ENCODE measurements at regions of chr17 and their contacts with region 1.

Region 1: GRCh38 chr17:21126645-21127510 is at the start of gene DHRS7B:
- DNase-seq: peak; percentile 95
- H3K4me3 Mint-ChIP-seq: peak within 1 kb of the TSS; percentile 93
- H3K27ac Mint-ChIP-seq: peak within 1 kb of the TSS; percentile 95
- H3K4me1 Mint-ChIP-seq: peaks cover 24% of the 10 kb centered on the region
- H3K27me3 Mint-ChIP-seq: no peaks in the 10 kb centered on the region
- total RNA-seq, gene DHRS7B: 17.7 and 19.4 TPM in 2 replicates

Region 2: DNA sequence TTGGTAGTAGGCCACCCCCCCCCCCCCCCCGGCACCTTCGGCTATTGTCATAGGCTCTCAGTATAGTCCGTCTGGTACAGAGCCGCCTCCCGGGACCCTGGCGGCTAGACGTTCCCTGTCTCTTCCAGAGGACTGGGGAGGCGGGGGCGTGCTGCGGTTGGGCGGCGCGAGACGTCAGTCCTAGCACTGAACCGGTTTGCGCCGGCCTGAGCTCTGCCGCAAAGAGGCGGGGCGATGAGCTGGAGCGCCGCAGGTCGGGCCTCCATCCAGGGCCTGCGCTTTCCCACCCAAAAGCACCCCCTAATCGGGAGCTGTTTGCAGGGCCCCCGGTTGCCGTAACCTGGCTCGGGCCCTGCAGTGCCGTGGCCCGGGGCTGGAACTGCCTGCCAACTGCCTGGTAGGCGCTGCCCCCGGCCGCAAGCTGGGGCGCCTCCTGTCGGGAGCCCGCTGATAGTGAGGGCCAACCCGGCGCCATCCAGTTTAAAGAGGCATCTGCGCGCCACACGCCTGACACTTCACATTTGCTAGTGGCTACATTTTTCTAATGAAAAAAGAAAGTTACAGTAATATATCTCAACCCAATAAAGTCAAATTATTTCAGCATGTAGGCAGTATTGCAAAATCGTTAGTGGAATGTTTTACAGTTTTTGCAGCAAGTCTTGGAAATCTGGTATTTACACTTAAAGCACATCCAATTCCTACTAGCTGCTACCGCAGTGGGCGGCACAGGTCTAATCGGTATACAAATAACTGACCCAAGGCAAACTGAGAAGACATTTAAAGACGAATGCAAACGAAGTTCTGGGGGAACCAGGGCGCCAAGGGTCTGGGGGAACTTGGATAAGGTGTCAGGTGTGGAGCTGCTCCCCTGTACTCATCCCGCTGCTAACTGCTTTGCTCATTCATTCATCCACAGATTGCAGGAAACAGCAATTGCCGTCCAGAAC is 83.3 kb before region 1 on chr17:
- intact Hi-C with region 1: loop called (anchors 2 kb)
- DNase-seq: peak; percentile 96
- H3K4me3 Mint-ChIP-seq: peak overlapping the region; percentile 75
- H3K27ac Mint-ChIP-seq: peak overlapping the region; percentile 81
- H3K4me1 Mint-ChIP-seq: peaks cover 17% of the 10 kb centered on the region
- H3K27me3 Mint-ChIP-seq: peaks cover 3% of the 10 kb centered on the region

Region 3: GRCh38 chr17:21098934-21099689 is 27.8 kb before region 1 on chr17:
- intact Hi-C with region 1: loop called (anchors 2 kb)
- DNase-seq: peak; percentile 76
- H3K4me3 Mint-ChIP-seq: peak overlapping the region; percentile 93
- H3K27ac Mint-ChIP-seq: peak overlapping the region; percentile 97
- H3K4me1 Mint-ChIP-seq: peaks cover 9% of the 10 kb centered on the region
- H3K27me3 Mint-ChIP-seq: no peaks in the 10 kb centered on the region

Region 4: DNA sequence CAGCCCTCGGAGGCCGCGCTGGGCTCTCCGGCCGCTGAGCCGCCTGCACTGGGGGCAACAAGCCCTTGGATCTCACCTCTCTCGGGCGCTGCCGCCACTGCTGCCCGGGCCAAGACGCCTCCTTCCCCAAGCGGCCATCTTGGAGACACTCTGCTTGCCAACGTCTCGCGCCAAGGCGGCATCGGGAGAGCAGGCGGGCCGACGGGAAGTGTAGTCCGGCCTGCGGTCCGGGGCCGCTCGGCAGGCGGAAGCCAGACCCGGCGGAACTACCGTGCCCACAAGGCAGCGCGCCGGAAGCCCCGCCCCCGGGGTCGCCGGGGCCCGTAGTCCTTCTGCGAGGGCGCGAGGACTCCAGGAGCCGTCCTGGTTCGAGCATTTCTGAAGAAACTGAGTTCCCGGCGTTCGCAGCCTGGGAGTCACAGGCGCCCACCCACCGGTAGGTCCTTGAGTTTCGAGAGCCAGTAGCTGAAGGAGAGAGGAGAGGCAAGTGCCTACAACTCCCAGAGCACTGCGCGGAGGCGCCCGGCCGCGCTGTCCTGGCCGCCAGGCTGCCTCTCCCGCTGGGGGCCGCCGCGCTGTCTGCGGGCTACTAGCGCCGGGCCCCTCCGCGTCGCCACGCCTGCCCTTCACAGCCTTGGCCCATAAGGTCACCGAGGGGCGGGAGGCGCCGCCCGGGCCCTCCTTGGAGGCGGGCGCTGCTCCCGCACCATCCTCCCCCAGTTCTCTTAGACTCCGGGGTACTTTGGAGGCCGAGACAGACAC is 87.3 kb after region 1 on chr17 and contains the start of gene TMEM11:
- intact Hi-C with region 1: loop called (anchors 1 kb)
- DNase-seq: peak; percentile 94
- H3K4me3 Mint-ChIP-seq: peak within 1 kb of the TSS; percentile 94
- H3K27ac Mint-ChIP-seq: peak within 1 kb of the TSS; percentile 94
- H3K4me1 Mint-ChIP-seq: peaks cover 40% of the 10 kb centered on the region
- H3K27me3 Mint-ChIP-seq: no peaks in the 10 kb centered on the region
- total RNA-seq, gene TMEM11: 27.1 and 30.5 TPM in 2 replicates

Region 5: GRCh38 chr17:21252796-21253645 is 126.1 kb after region 1 on chr17 and contains the start of gene NATD1:
- intact Hi-C with region 1: loop called (anchors 1 kb)
- DNase-seq: peak; percentile 65
- H3K4me3 Mint-ChIP-seq: peak within 1 kb of the TSS; percentile 79
- H3K27ac Mint-ChIP-seq: no peak within 1 kb of the TSS
- H3K4me1 Mint-ChIP-seq: peaks cover 4% of the 10 kb centered on the region
- H3K27me3 Mint-ChIP-seq: peaks cover 12% of the 10 kb centered on the region
- total RNA-seq, gene NATD1: 1.4 and 1.6 TPM in 2 replicates

Region 6: DNA sequence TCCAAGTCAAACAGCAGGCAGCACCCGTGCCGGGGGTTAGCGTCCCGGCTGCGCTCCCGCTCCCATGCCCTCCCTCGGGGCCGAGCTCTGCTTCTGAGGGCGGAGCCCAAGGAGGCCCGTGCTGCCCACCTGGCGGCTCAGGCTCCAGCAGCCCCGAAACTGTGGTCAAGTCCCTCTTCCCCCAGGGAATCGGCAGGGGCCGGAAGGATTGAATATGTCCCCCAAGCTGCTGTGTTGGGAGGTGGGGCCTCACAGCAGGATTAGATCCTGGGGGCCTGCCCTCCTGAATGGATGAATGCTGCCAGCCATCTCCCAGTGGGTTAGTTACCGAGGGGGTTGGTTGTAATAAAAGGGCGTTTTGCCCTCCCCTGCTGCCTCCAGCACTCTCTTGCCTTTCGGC is 191.6 kb after region 1 on chr17:
- intact Hi-C with region 1: loop called (anchors 10 kb)
- DNase-seq: no peak
- H3K4me3 Mint-ChIP-seq: no peak overlapping the region
- H3K27ac Mint-ChIP-seq: no peak overlapping the region
- H3K4me1 Mint-ChIP-seq: peaks cover 4% of the 10 kb centered on the region
- H3K27me3 Mint-ChIP-seq: peaks cover 4% of the 10 kb centered on the region

Measured in activated T-helper 2 cell treated with anti-CD3 and anti-CD28 coated beads, Interferon-gamma antibody, Interleukin-2, Interleukin-4, amounts not matched to agents 10 μg/mL and 5 μg/mL and 100 μg/mL, durations not matched to agents 14 hours and 24 hours and 36 hours (primary cell).